Endothelial cell of umbilical vein (primary cell): ENCODE measurements at regions of chr6 and their contacts with region 1.

Region 1: DNA sequence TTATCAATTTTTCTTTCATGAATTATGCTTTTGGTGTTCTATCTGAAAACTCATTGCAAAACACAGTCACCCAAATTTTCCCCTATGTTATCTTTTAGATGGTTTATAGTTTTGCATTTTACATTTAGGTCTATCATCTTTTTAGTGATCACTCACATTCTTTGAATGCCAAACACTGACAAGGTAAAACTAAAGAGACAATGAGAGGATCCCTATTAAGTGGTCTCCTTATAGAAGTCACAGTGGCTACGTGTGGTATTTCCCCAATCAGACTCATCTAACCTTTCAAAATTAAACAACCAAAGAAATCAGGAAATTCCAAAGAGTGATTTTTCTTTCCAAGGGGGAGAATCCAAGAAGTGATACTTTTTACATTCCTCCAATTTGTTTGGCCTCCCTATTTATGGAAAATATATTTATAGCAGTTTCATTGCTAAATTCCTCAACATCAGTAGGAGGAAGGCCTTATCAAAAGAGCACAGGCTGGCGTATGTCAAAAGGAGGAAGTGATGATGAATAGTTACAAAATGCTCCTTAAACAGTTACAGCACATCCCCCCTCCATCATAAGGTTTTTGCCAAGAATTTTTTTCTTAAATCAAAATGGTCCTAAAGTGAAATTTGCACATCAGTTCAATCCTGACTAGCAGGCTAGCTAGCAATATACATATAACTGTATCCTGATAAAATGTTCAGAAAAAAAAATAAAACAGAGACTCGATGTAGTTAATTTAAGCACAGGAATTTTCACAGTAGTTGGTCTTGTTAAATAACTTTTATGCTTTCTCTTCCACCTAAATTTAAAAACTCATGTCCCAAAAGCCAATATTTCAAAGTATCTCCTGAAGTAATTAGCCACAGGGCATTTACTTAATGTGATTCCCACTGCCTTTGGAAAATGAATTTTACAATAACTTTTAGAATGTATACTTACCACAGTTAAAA is 76.2 kb upstream of the IPCEF1 start:
- DNase-seq: peak; percentile 94
- H3K4me3 ChIP-seq: no peak overlapping the region
- H3K27ac ChIP-seq: peak overlapping the region; percentile 39
- H3K4me1 ChIP-seq: peaks cover 21% of the 10 kb centered on the region
- H3K27me3 ChIP-seq: no peaks in the 10 kb centered on the region
- CTCF ChIP-seq: no peak
- POLR2A ChIP-seq: peak; percentile 83

Region 2: DNA sequence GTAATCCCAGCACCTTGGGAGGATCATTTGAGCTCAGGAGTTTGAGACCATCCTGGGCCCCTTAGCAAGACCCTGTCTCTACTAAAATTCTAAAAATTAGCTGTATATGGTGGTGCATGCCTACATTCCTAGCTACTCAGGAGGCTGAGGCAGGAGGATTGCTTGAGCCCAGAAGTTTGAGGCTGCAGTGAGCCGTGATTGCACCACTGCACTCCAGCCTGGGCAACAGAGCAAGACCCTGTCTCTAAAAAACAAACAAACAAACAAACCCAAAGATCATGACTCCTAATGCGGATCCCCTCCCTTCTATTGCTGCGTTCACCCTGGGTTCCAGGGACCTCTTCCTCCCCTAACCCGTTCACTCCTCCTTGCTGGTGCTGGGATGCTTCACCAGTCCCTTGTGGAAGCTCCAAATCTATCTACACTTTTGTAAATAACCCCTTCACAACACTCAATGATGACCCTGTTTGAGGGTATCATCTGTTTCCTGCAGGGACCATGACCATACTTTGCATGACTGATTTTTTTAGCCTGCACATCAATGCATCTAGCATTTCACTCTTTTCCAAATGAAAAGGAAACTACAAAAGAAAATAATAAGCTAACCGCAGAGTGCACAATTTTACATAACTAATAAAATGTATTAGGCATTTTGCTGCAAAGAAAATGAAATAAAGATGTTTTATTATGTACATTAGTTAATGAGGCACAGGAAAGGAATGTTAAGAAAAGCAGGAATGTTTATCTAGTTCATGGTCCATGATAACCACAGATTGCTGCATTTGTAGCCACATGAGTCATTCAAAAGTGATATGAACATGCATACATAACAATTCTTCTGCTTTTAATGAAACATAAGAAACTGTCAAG is 45.7 kb before region 1 on chr6:
- CTCF ChIA-PET with region 1: no interaction called
- POLR2A ChIA-PET with region 1: no interaction called
- dilution Hi-C with region 1: no loop called
- intact Hi-C with region 1: loop called (anchors 2 kb)
- DNase-seq: peak; percentile 82
- H3K4me3 ChIP-seq: no peak overlapping the region
- H3K27ac ChIP-seq: peak overlapping the region; percentile 50
- H3K4me1 ChIP-seq: peaks cover 17% of the 10 kb centered on the region
- H3K27me3 ChIP-seq: no peaks in the 10 kb centered on the region
- CTCF ChIP-seq: no peak
- POLR2A ChIP-seq: no peak

Region 3: DNA sequence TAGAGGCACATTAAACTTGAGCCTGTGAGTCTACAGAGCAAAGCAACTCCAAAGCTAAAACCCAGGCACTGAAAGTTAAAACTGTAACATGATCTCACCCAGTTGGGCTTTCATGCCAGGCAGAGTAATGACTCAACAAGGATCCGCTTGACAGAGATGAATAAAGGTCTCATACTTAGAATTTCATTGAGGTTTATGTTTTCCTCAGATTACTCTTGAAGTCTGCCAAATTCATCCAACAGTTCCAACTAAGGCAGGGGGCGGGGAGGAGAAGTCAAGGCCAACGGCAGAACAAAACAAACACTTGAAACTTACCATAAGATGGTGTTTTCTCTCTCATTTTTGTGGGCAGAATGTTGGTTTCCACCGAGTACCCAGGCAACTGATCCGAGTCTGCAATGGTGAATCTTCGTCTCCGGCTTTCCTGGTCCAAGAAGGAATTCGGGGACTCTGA is 22.2 kb before region 1 on chr6:
- CTCF ChIA-PET with region 1: no interaction called
- POLR2A ChIA-PET with region 1: interaction called, 12 read pairs
- dilution Hi-C with region 1: no loop called
- intact Hi-C with region 1: loop called (anchors 1 kb)
- DNase-seq: peak; percentile 97
- H3K4me3 ChIP-seq: peak overlapping the region in 1 of 3 experiments; percentile 19
- H3K27ac ChIP-seq: peak overlapping the region; percentile 99
- H3K4me1 ChIP-seq: peaks cover 25% of the 10 kb centered on the region
- H3K27me3 ChIP-seq: no peaks in the 10 kb centered on the region
- CTCF ChIP-seq: no peak
- POLR2A ChIP-seq: no peak

Region 4: GRCh38 chr6:154482858-154483257 is 50.1 kb after region 1 on chr6:
- CTCF ChIA-PET with region 1: no interaction called
- POLR2A ChIA-PET with region 1: no interaction called
- dilution Hi-C with region 1: no loop called
- intact Hi-C with region 1: loop called (anchors 1 kb)
- DNase-seq: peak; percentile 95
- H3K4me3 ChIP-seq: no peak overlapping the region
- H3K27ac ChIP-seq: peak overlapping the region; percentile 27
- H3K4me1 ChIP-seq: peaks cover 13% of the 10 kb centered on the region
- H3K27me3 ChIP-seq: no peaks in the 10 kb centered on the region
- CTCF ChIP-seq: no peak
- POLR2A ChIP-seq: peak; percentile 67

Region 5: GRCh38 chr6:154569156-154569862 is 136.5 kb after region 1 on chr6:
- CTCF ChIA-PET with region 1: no interaction called
- POLR2A ChIA-PET with region 1: no interaction called
- dilution Hi-C with region 1: no loop called
- intact Hi-C with region 1: no loop called
- DNase-seq: peak; percentile 62
- H3K4me3 ChIP-seq: no peak overlapping the region
- H3K27ac ChIP-seq: no peak overlapping the region
- H3K4me1 ChIP-seq: peaks cover 16% of the 10 kb centered on the region
- H3K27me3 ChIP-seq: no peaks in the 10 kb centered on the region
- CTCF ChIP-seq: no peak
- POLR2A ChIP-seq: no peak

Region 6: DNA sequence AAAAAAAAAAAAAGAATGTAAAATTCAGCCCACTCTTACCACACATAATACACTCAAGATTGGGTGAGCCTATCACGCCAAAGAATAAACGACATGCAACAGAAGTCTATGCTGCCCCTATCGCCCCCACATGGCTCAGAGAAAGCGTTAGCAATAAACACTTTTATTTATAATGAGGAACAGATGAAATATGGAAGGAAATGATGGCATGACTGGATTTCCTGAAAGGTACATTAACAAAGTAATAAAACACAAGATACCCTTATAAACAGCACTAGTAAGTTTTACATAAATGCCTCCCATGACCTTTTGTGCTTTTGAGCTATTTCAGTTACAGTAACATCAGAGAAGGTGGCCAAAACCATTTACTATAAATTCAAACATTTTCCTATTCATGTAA is 229.0 kb after region 1 on chr6:
- CTCF ChIA-PET with region 1: no interaction called
- POLR2A ChIA-PET with region 1: no interaction called
- dilution Hi-C with region 1: no loop called
- intact Hi-C with region 1: loop called (anchors 1 kb)
- DNase-seq: peak; percentile 92
- H3K4me3 ChIP-seq: no peak overlapping the region
- H3K27ac ChIP-seq: peak overlapping the region; percentile 61
- H3K4me1 ChIP-seq: peaks cover 17% of the 10 kb centered on the region
- H3K27me3 ChIP-seq: no peaks in the 10 kb centered on the region
- CTCF ChIP-seq: peak; percentile 31 to 42
- POLR2A ChIP-seq: peak; percentile 29